Caco-2 (cell line): ENCODE measurements at regions of chr12 and their contacts with region 1.

Region 1: GRCh38 chr12:30847259-30847658 is 79.3 kb upstream of the TSPAN11 start:
- DNase-seq: peak in 1 of 2 experiments; percentile 78
- H3K4me3 ChIP-seq: no peak overlapping the region
- H3K4me3 Mint-ChIP-seq: no peak overlapping the region
- H3K27ac Mint-ChIP-seq: no peak overlapping the region
- H3K4me1 ChIP-seq: 0 out of 2 replicates have a peak, but pooled peaks cover 4% of the 10 kb centered on the region
- H3K4me1 Mint-ChIP-seq: peaks cover 15% of the 10 kb centered on the region
- H3K27me3 ChIP-seq: no peaks in the 10 kb centered on the region
- H3K27me3 Mint-ChIP-seq: peaks cover 14% of the 10 kb centered on the region
- CTCF ChIP-seq: peak; percentile 47 to 87

Region 2: DNA sequence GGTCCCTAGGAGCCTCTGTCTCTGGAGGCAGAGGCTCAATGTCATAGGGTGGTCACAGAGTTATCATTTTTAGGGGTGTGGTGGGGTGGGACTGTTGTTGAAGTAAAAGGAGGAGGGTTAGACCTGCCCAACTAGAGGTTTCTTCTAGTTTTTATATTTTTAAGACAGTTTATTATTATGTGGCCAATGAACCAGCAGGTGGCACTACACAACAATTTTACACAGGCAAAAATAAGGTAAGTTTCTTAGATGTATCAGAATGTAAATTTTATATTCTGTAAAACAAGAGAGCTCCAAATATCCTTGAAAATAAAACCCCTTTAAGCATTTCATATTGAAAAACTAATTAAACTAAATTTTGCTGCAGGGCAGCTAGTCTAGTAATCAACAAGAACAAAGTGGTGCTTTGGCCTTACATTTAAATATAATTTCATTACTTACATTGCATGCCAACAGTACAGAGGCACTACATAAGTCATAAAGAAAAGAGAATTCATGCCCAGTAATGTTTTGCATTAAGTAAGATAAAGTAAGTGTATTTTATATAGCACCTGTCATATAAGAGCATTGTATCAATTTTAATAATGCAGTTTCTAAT is 1327.6 kb before region 1 on chr12:
- CTCF ChIA-PET with region 1: no interaction called
- POLR2A ChIA-PET with region 1: no interaction called
- intact Hi-C with region 1: loop called (anchors 2 kb)
- DNase-seq: peak in 1 of 2 experiments; percentile 43
- H3K4me3 ChIP-seq: no peak overlapping the region
- H3K4me3 Mint-ChIP-seq: no peak overlapping the region
- H3K27ac Mint-ChIP-seq: no peak overlapping the region
- H3K4me1 ChIP-seq: no peaks in the 10 kb centered on the region
- H3K4me1 Mint-ChIP-seq: no peaks in the 10 kb centered on the region
- H3K27me3 ChIP-seq: no peaks in the 10 kb centered on the region
- H3K27me3 Mint-ChIP-seq: peaks cover 12% of the 10 kb centered on the region
- CTCF ChIP-seq: peak; percentile 64 to 70

Region 3: GRCh38 chr12:29552324-29552927 is 1294.8 kb before region 1 on chr12:
- CTCF ChIA-PET with region 1: no interaction called
- POLR2A ChIA-PET with region 1: no interaction called
- intact Hi-C with region 1: loop called (anchors 1 kb)
- DNase-seq: peak; percentile 68 to 77
- H3K4me3 ChIP-seq: no peak overlapping the region
- H3K4me3 Mint-ChIP-seq: no peak overlapping the region
- H3K27ac Mint-ChIP-seq: no peak overlapping the region
- H3K4me1 ChIP-seq: no peaks in the 10 kb centered on the region
- H3K4me1 Mint-ChIP-seq: no peaks in the 10 kb centered on the region
- H3K27me3 ChIP-seq: no peaks in the 10 kb centered on the region
- H3K27me3 Mint-ChIP-seq: peaks cover 10% of the 10 kb centered on the region
- CTCF ChIP-seq: peak; percentile 88 to 92

Region 4: GRCh38 chr12:30970559-30971197 is 123.4 kb after region 1 on chr12:
- CTCF ChIA-PET with region 1: interaction called, 6 read pairs
- POLR2A ChIA-PET with region 1: interaction called, 3 read pairs
- intact Hi-C with region 1: loop called (anchors 5 kb)
- DNase-seq: peak; percentile 71 to 79
- H3K4me3 ChIP-seq: no peak overlapping the region
- H3K4me3 Mint-ChIP-seq: no peak overlapping the region
- H3K27ac Mint-ChIP-seq: peak overlapping the region; percentile 65
- H3K4me1 ChIP-seq: peaks cover 13% of the 10 kb centered on the region; the same call in 1 of the 2 replicates
- H3K4me1 Mint-ChIP-seq: peaks cover 11% of the 10 kb centered on the region
- H3K27me3 ChIP-seq: no peaks in the 10 kb centered on the region; the same call in 1 of the 2 replicates
- H3K27me3 Mint-ChIP-seq: peaks cover 28% of the 10 kb centered on the region
- CTCF ChIP-seq: no peak

Region 5: DNA sequence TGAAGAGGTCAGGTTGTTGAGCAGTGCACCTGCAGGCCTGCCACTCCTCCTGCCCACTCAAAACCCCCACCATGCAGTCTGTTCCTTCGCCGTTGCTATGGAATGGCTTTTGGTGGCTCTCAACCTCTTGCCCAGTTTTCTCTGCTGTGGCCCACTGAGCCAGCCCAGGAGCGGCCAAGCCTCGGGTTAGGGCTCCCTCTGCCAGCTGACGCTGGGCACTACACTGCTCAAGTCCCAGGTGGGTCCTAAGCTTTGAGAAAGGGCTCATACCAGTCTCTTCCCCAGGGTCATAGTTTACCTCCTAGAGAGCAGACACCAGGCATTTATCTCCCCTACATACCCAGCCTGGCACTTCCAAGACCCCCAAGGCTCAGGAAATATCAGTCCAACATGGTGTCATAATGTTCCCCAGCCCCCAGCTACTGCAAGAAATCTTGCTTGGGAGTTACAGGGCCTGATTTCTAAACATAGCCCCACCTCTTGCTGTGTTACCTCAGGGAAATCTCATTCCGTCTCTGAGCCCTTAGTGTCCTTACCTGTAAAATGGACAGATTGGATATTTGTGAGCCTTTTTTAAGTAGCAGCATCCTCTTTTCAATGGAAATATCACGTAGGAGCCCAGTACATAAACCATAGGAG is 138.7 kb after region 1 on chr12:
- CTCF ChIA-PET with region 1: interaction called, 26 read pairs
- POLR2A ChIA-PET with region 1: no interaction called
- intact Hi-C with region 1: loop called (anchors 1 kb)
- DNase-seq: peak; percentile 68 to 80
- H3K4me3 ChIP-seq: no peak overlapping the region
- H3K4me3 Mint-ChIP-seq: no peak overlapping the region
- H3K27ac Mint-ChIP-seq: no peak overlapping the region
- H3K4me1 ChIP-seq: no peaks in the 10 kb centered on the region
- H3K4me1 Mint-ChIP-seq: no peaks in the 10 kb centered on the region
- H3K27me3 ChIP-seq: no peaks in the 10 kb centered on the region
- H3K27me3 Mint-ChIP-seq: no peaks in the 10 kb centered on the region
- CTCF ChIP-seq: peak; percentile 91 to 95

Region 6: GRCh38 chr12:31011746-31012566 is 164.7 kb after region 1 on chr12:
- CTCF ChIA-PET with region 1: interaction called, 7 read pairs
- POLR2A ChIA-PET with region 1: no interaction called
- intact Hi-C with region 1: loop called (anchors 1 kb)
- DNase-seq: peak in 1 of 2 experiments; percentile 56
- H3K4me3 ChIP-seq: no peak overlapping the region
- H3K4me3 Mint-ChIP-seq: no peak overlapping the region
- H3K27ac Mint-ChIP-seq: no peak overlapping the region
- H3K4me1 ChIP-seq: no peaks in the 10 kb centered on the region
- H3K4me1 Mint-ChIP-seq: no peaks in the 10 kb centered on the region
- H3K27me3 ChIP-seq: no peaks in the 10 kb centered on the region
- H3K27me3 Mint-ChIP-seq: peaks cover 15% of the 10 kb centered on the region
- CTCF ChIP-seq: peak; percentile 58 to 63

Region 7: DNA sequence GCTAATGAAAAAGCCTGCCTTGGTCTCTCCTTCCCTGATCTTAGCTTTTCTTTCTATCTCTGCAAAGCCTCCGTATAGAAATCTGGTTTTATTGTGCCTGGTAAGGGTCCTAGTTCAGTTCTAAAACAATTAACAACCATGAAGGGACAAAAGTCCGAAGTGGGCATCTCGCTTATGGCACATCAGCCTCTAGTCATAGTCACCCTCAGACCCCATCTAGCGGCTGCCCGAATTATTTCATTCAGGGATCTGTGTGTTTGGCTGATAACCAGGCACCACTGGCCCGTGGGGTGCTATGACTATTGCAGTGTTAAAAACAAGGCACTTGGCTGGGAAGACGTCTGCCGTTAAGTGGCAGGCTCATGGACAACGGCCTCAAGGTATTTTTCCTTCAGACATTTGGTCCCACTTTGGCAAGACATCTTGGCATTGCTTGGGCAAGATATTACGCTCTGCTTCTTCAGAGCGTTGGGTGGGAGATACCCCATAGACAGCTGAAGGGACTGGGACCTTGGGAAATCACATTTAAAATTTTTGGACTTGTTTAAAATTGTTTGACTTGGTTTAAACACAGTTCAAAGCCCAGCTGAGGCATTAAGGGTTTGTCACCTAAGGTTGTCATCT is 391.6 kb after region 1 on chr12:
- CTCF ChIA-PET with region 1: interaction called, 3 read pairs
- POLR2A ChIA-PET with region 1: no interaction called
- intact Hi-C with region 1: loop called (anchors 1 kb)
- DNase-seq: peak; percentile 81 to 84
- H3K4me3 ChIP-seq: no peak overlapping the region
- H3K4me3 Mint-ChIP-seq: no peak overlapping the region
- H3K27ac Mint-ChIP-seq: no peak overlapping the region
- H3K4me1 ChIP-seq: no peaks in the 10 kb centered on the region
- H3K4me1 Mint-ChIP-seq: peaks cover 10% of the 10 kb centered on the region
- H3K27me3 ChIP-seq: no peaks in the 10 kb centered on the region
- H3K27me3 Mint-ChIP-seq: peaks cover 17% of the 10 kb centered on the region
- CTCF ChIP-seq: peak; percentile 83 to 87